ENCODE measurements at regions of chr11 and their contacts with region 1.

Region 1: GRCh38 chr11:124194698-124195410 is 11.7 kb downstream of the OR10D3 start:
- H3K4me3 Mint-ChIP-seq: no peak overlapping the region
- H3K27ac Mint-ChIP-seq: no peak overlapping the region
- H3K4me1 Mint-ChIP-seq: peaks cover 13% of the 10 kb centered on the region
- H3K27me3 Mint-ChIP-seq: peaks cover 3% of the 10 kb centered on the region

Region 2: DNA sequence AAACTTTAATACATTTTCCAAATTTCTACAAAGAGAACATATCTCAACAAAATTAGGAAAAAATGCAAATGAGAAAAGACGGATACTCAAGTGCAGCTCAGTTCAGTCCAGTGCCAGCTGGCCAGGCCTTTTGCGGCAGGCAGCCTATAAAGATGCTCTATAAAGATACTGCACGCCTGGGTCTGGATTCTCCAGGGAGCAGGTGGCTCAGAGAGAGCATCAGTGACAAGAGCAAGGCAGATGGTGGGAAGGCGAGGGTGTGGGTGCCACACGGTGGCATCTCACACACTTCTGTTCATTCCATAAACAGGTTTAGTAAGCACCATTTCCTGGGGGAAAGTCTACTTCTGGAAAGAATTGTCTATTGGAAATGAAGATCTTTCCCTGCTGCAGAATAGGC is 522.3 kb before region 1 on chr11:
- intact Hi-C with region 1: no loop called
- H3K4me3 Mint-ChIP-seq: no peak overlapping the region
- H3K27ac Mint-ChIP-seq: no peak overlapping the region
- H3K4me1 Mint-ChIP-seq: no peaks in the 10 kb centered on the region
- H3K27me3 Mint-ChIP-seq: no peaks in the 10 kb centered on the region

Region 3: GRCh38 chr11:124108156-124108555 is 86.7 kb before region 1 on chr11:
- intact Hi-C with region 1: loop called (anchors 5 kb)
- H3K4me3 Mint-ChIP-seq: no peak overlapping the region
- H3K27ac Mint-ChIP-seq: no peak overlapping the region
- H3K4me1 Mint-ChIP-seq: peaks cover 17% of the 10 kb centered on the region
- H3K27me3 Mint-ChIP-seq: peaks cover 13% of the 10 kb centered on the region

Region 4: GRCh38 chr11:124359566-124359965 is 164.7 kb after region 1 on chr11:
- intact Hi-C with region 1: no loop called
- H3K4me3 Mint-ChIP-seq: no peak overlapping the region
- H3K27ac Mint-ChIP-seq: no peak overlapping the region
- H3K4me1 Mint-ChIP-seq: no peaks in the 10 kb centered on the region
- H3K27me3 Mint-ChIP-seq: no peaks in the 10 kb centered on the region

Measured in dendritic cell treated with granulocyte-macrophage colony-stimulating factor and Interleukin-4, amounts not matched to agents 40 ng/mL and 50 ng/mL, for 4 days (primary cell).